A549 (cell line): ENCODE measurements at regions of chr1 and their contacts with region 1.

Region 1: GRCh38 chr1:67685067-67685557 is at the start of gene GADD45A:
- DNase-seq: peak; percentile 94 to 97
- ATAC-seq: peak; percentile 87 to 95
- H3K4me3 ChIP-seq: peak within 1 kb of the TSS; percentile 80
- H3K27ac ChIP-seq: peak within 1 kb of the TSS; percentile 96 to 99
- H3K4me1 ChIP-seq: peaks cover 43% of the 10 kb centered on the region
- CTCF ChIP-seq: no peak
- EP300 ChIP-seq: no peak
- POLR2A ChIP-seq: peak; percentile 99
- RAD21 ChIP-seq: peak in 1 of 2 experiments; percentile 28; a peak in 1 of 5 replicates
- polyA plus RNA-seq, gene GADD45A: 26.6 and 44.7 TPM in 2 replicates

Region 2: GRCh38 chr1:67570473-67571143 is 114.5 kb before region 1 on chr1:
- CTCF ChIA-PET with region 1: no interaction called
- POLR2A ChIA-PET with region 1: interaction called, 93 read pairs
- DNase-seq: peak; percentile 56 to 83
- ATAC-seq: peak; percentile 91 to 96
- H3K4me3 ChIP-seq: no peak overlapping the region
- H3K27ac ChIP-seq: peak overlapping the region; percentile 68 to 85
- H3K4me1 ChIP-seq: peaks cover 41% of the 10 kb centered on the region
- CTCF ChIP-seq: no peak
- EP300 ChIP-seq: no peak
- POLR2A ChIP-seq: no peak
- RAD21 ChIP-seq: no peak

Region 3: GRCh38 chr1:67700692-67701410 is 15.7 kb after region 1 on chr1:
- CTCF ChIA-PET with region 1: interaction called, 3 read pairs
- POLR2A ChIA-PET with region 1: interaction called, 19 read pairs
- DNase-seq: peak; percentile 59 to 79
- ATAC-seq: peak; percentile 90 to 92
- H3K4me3 ChIP-seq: no peak overlapping the region
- H3K27ac ChIP-seq: peak overlapping the region; percentile 55 to 81
- H3K4me1 ChIP-seq: peaks cover 28% of the 10 kb centered on the region
- CTCF ChIP-seq: no peak
- EP300 ChIP-seq: peak in 1 of 2 experiments; percentile 24; a peak in 1 of 5 replicates
- POLR2A ChIP-seq: no peak
- RAD21 ChIP-seq: peak in 1 of 2 experiments; percentile 20; a peak in 1 of 5 replicates

Region 4: GRCh38 chr1:67869233-67869632 is 184.1 kb after region 1 on chr1:
- CTCF ChIA-PET with region 1: no interaction called
- POLR2A ChIA-PET with region 1: no interaction called
- DNase-seq: no peak
- ATAC-seq: no peak
- H3K4me3 ChIP-seq: no peak overlapping the region
- H3K27ac ChIP-seq: no peak overlapping the region
- H3K4me1 ChIP-seq: no peaks in the 10 kb centered on the region
- CTCF ChIP-seq: no peak
- EP300 ChIP-seq: no peak
- POLR2A ChIP-seq: no peak
- RAD21 ChIP-seq: no peak